AG04449 (cell line): ENCODE measurements at regions of chr2 and their contacts with region 1.

Region 1: GRCh38 chr2:172894689-172895387 is 159.2 kb downstream of the RAPGEF4 start:
- DNase-seq: no peak
- H3K4me3 ChIP-seq: no peak overlapping the region
- CTCF ChIP-seq: no peak

Region 2: GRCh38 chr2:172864182-172864581 is 30.7 kb before region 1 on chr2:
- CTCF ChIA-PET with region 1: interaction called, 10 read pairs
- POLR2A ChIA-PET with region 1: no interaction called
- DNase-seq: no peak
- H3K4me3 ChIP-seq: no peak overlapping the region
- CTCF ChIP-seq: peak; percentile 60